Aorta (tissue), 5 donors: ENCODE measurements at regions of chr11 and their contacts with region 1.

Region 1: GRCh38 chr11:114075891-114076441 is 16.5 kb downstream of the ZBTB16 start:
- DNase-seq: peak; percentile 77 to 86
- ATAC-seq: peak; percentile 8
- H3K4me3 ChIP-seq: no peak overlapping the region
- H3K27ac ChIP-seq: peak overlapping the region; percentile 39 to 92
- H3K4me1 ChIP-seq: peaks cover 5 to 26% of the 10 kb centered on the region in 2 donors
- H3K27me3 ChIP-seq: no peaks in the 10 kb centered on the region

Region 2: DNA sequence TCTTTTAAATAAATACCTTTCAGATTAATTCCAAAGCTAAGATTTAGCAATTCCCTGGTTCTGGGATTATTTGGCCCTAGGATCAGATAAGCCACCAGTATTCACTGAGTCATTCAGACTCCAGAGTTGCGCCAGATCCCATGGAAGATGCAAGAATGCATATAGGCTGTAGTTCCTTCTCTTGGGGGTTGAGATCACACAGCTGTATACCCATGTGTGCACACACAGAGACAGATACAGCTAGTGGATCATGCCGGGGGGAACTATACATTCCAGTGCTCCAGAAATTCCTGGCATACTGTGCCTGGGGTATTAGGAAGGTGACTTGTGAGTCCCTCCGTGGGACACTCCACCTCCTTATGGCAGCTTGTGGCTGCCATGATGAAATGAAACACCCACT is 58.9 kb after region 1 on chr11:
- intact Hi-C with region 1: loop called in 1 of 2 experiments (anchors 5 kb)
- DNase-seq: peak in 1 of 2 donors; percentile 51
- ATAC-seq: no peak
- H3K4me3 ChIP-seq: no peak overlapping the region
- H3K27ac ChIP-seq: peak overlapping the region; percentile 50 to 94
- H3K4me1 ChIP-seq: peaks cover 21 to 26% of the 10 kb centered on the region in 2 donors
- H3K27me3 ChIP-seq: no peaks in the 10 kb centered on the region

Region 3: GRCh38 chr11:114159802-114160632 is 84.1 kb after region 1 on chr11:
- intact Hi-C with region 1: loop called (anchors 5 kb)
- DNase-seq: peak; percentile 99
- ATAC-seq: peak; percentile 76
- H3K4me3 ChIP-seq: no peak overlapping the region
- H3K27ac ChIP-seq: peak overlapping the region; percentile 94
- H3K4me1 ChIP-seq: peaks cover 16 to 21% of the 10 kb centered on the region in 2 donors
- H3K27me3 ChIP-seq: no peaks in the 10 kb centered on the region

Region 4: GRCh38 chr11:114180301-114181055 is 104.5 kb after region 1 on chr11:
- intact Hi-C with region 1: loop called (anchors 5 kb)
- DNase-seq: peak; percentile 69 to 79
- ATAC-seq: peak; percentile 54
- H3K4me3 ChIP-seq: peak overlapping the region in 1 of 2 donors; percentile 66
- H3K27ac ChIP-seq: peak overlapping the region; percentile 94 to 99
- H3K4me1 ChIP-seq: peaks cover 3 to 5% of the 10 kb centered on the region in 2 donors
- H3K27me3 ChIP-seq: no peaks in the 10 kb centered on the region